A673 (cell line): ENCODE measurements at regions of chr10 and their contacts with region 1.

Region 1: DNA sequence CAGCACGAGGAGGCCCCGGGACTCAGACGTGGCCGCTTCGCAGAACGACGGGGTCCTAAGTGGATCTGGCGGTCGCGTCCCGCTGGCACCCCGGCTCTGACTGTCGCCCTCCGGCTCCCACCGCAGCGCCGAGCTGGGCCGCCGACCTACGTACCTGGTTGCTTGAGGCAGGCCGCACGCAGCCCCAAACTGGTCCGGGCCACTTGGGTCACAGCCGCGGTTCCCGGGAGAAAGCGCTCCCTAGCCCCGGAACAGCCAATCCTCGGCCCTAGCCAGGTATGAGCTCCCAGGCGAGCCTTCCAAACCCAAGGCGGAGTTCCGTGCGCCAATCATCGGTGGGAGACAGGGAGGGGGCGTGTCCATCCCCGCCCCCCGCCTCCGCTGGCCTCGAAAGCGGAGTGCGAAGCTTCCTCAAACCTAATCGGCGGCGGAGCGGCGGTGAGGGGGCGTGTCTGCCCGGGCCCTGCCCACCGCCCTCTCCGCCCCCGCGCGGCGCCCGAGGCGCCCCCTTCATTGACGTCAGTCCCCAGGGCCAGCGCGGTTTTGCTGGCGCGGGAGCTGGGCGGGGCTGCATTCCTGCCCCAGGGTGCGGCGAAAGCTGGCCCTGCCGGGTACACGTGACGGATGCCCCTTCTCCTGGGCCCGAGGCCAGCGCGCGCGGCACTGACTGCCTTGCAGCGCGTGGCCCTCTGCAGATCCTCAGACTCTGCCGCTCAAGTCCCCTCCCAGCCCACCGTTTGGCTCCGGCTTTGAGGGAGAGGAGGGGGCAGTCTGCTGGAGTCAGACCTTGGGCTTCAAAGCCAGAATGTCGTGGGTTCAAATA is at the start of gene AVPI1:
- DNase-seq: peak; percentile 98
- H3K4me3 ChIP-seq: peak within 1 kb of the TSS; percentile 61
- H3K27ac ChIP-seq: peak within 1 kb of the TSS; percentile 79
- H3K4me1 ChIP-seq: peaks cover 9% of the 10 kb centered on the region
- H3K27me3 ChIP-seq: no peaks in the 10 kb centered on the region
- CTCF ChIP-seq: no peak
- total RNA-seq, gene AVPI1: 2.4 and 2.6 TPM in 2 replicates

Region 2: DNA sequence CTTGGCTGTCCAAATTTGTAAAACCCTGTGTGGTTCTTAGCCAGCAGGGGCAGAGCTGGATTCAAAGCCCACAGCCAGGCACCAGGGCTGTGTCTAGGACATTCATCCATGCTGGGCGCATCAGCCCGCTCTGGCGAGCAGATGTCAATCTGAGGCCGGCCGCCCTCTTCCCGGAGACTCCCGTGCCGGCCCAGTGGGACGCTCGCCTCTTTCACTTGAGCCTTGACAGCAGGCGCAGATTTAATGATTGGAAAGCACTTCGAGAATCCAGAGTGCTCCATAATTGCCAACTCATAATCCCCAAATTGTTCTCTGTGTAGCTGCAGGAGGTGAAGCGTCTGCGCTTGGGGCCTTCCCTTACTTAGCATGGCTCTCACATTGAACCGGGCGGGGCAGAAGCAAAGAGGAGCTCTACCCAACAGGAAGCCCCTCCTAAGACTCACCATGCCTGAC is 538.1 kb before region 1 on chr10:
- CTCF ChIA-PET with region 1: no interaction called
- POLR2A ChIA-PET with region 1: no interaction called
- intact Hi-C with region 1: no loop called
- DNase-seq: peak; percentile 91
- H3K4me3 ChIP-seq: no peak overlapping the region
- H3K27ac ChIP-seq: no peak overlapping the region
- H3K4me1 ChIP-seq: peaks cover 15% of the 10 kb centered on the region
- H3K27me3 ChIP-seq: peaks cover 15% of the 10 kb centered on the region
- CTCF ChIP-seq: no peak

Region 3: DNA sequence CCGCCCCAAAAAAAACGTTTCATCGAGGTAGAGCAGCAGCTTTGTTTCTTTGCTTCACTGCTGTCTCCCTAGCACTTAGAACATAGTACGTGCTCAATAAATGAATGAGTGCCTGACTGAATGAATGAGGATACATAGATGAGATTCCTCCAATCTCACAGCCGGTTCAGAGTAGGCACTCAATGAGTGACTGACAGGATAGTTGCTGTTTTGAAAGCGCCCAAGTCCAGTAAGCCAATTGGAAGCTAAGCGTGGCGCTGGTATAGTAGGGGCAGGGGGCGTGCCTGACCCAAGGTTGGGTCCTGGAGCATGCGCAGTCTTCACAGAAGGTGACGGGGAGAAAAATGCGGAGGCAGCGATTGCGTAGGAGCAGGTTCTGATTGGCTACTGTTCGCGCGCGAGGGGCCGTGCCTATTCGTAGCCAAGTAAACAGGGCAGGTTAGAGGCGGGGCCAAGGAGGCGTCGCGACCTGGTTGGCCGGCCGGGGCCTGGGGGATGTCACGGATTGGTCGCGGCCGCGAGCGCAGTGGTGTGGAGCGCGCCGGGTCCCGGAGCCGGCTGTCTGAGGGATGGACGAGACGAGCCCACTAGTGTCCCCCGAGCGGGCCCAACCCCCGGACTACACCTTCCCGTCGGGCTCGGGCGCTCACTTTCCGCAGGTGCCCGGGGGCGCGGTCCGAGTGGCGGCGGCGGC is 46.9 kb before region 1 on chr10 and contains the start of gene PI4K2A:
- CTCF ChIA-PET with region 1: no interaction called
- POLR2A ChIA-PET with region 1: interaction called, 4 read pairs
- intact Hi-C with region 1: loop called (anchors 5 kb)
- DNase-seq: peak; percentile 100
- H3K4me3 ChIP-seq: peak within 1 kb of the TSS; percentile 90
- H3K27ac ChIP-seq: peak within 1 kb of the TSS; percentile 70
- H3K4me1 ChIP-seq: peaks cover 6% of the 10 kb centered on the region
- H3K27me3 ChIP-seq: no peaks in the 10 kb centered on the region
- CTCF ChIP-seq: no peak
- total RNA-seq, gene PI4K2A: 21.3 and 23.6 TPM in 2 replicates

Region 4: DNA sequence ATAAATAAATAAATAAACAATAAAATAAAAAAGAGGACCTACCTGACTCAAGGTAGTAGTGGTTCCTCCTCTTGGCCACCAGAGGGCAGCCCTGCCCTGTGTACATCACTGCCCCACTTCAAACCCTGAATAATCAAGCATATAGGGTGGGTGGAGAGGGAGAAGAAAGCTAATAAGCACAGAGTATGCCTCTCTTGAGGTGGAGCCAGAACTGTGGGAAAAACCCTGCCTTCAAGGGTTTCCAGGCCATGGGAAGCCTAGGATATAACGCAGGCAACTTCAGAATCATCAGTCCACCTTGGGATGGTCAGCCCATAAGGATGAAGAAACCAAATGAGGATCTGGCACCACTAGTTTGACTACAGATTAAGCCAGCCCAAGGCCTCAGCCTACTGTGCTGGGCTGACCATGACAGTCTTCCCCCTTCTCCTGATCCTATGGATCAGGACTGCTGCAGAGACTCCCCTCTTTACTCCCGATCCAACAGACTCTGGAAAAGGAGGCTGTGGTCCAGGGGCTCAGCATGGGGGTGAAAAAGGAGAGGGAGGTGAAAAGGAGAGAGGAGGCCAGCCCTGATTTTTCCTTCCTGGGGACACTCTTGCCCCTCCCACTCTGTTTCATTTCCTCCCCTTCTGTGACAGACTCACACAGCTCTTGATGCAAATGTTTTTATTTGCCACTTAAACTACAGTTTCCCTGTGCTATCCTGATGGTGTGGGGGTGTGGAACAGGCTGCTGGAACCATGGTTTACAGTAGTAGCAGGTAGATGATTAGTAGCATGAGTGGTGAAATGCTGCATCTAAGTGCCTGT is 10.2 kb before region 1 on chr10:
- CTCF ChIA-PET with region 1: interaction called, 12 read pairs
- POLR2A ChIA-PET with region 1: no interaction called
- intact Hi-C with region 1: no loop called
- DNase-seq: peak; percentile 65
- H3K4me3 ChIP-seq: no peak overlapping the region
- H3K27ac ChIP-seq: no peak overlapping the region
- H3K4me1 ChIP-seq: no peaks in the 10 kb centered on the region
- H3K27me3 ChIP-seq: no peaks in the 10 kb centered on the region
- CTCF ChIP-seq: peak; percentile 81

Region 5: GRCh38 chr10:97713339-97714047 is 26.3 kb after region 1 on chr10 and contains the start of gene MARVELD1:
- CTCF ChIA-PET with region 1: interaction called, 12 read pairs
- POLR2A ChIA-PET with region 1: interaction called, 3 read pairs
- intact Hi-C with region 1: no loop called
- DNase-seq: peak; percentile 87
- H3K4me3 ChIP-seq: peak within 1 kb of the TSS; percentile 82
- H3K27ac ChIP-seq: peak within 1 kb of the TSS; percentile 83
- H3K4me1 ChIP-seq: peaks cover 22% of the 10 kb centered on the region
- H3K27me3 ChIP-seq: no peaks in the 10 kb centered on the region
- CTCF ChIP-seq: no peak
- total RNA-seq, gene MARVELD1: 26.6 and 30.1 TPM in 2 replicates